ENCODE measurements at regions of chr14 and their contacts with region 1.

Region 1: GRCh38 chr14:96297000-96297399 is 41.0 kb downstream of the BDKRB1 start:
- DNase-seq: no peak
- H3K4me3 ChIP-seq: no peak overlapping the region
- H3K27ac ChIP-seq: no peak overlapping the region
- H3K27me3 ChIP-seq: no peaks in the 10 kb centered on the region
- CTCF ChIP-seq: peak; percentile 59

Region 2: GRCh38 chr14:96136352-96137005 is 160.5 kb before region 1 on chr14:
- CTCF ChIA-PET with region 1: no interaction called
- POLR2A ChIA-PET with region 1: no interaction called
- DNase-seq: no peak
- H3K4me3 ChIP-seq: no peak overlapping the region
- H3K27ac ChIP-seq: no peak overlapping the region
- H3K27me3 ChIP-seq: no peaks in the 10 kb centered on the region
- CTCF ChIP-seq: no peak

Region 3: DNA sequence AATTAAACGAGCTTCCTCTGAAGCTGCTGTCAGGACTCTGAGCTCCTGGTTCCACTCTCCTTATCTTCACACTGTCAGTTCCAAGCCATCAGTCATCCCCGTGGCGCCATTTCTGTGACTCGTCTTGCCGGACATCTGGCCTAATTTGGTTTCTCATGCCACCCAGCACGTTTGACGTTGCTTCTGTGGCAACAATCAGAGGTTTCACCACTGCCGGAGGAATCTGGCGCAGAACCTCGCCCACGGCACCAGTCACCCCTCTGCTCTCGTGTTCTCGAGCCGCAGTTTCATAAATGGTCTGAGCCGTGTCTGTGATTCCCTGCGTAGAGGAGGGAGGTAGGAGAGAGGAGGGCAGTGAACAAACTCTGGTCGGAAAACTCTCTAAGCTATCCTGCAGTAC is 11.3 kb before region 1 on chr14:
- CTCF ChIA-PET with region 1: interaction called, 30 read pairs
- POLR2A ChIA-PET with region 1: no interaction called
- DNase-seq: no peak
- H3K4me3 ChIP-seq: peak overlapping the region; percentile 5
- H3K27ac ChIP-seq: no peak overlapping the region
- H3K27me3 ChIP-seq: no peaks in the 10 kb centered on the region
- CTCF ChIP-seq: no peak

Region 4: DNA sequence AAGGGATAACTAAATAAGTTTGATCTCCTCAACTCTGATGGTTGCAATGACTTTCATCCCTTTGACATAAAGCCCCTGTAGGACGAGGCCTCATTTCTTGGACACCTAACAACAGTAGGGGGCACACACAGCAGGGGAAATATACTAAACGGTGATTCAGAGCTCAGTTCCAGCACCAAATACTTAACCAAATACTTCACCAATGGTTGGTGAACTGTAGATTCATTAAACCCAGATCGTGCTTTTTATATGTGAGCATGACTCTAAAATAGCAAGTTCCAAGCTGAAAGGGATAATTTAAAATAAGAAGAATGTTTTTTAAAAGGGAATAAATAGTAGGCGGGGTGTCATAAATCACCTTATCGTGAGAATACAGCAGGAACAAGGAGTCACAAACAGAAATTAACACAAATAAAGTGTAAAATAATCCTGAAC is 12.9 kb after region 1 on chr14:
- CTCF ChIA-PET with region 1: interaction called, 33 read pairs
- POLR2A ChIA-PET with region 1: no interaction called
- DNase-seq: no peak
- H3K4me3 ChIP-seq: no peak overlapping the region
- H3K27ac ChIP-seq: no peak overlapping the region
- H3K27me3 ChIP-seq: no peaks in the 10 kb centered on the region
- CTCF ChIP-seq: peak; percentile 29

Region 5: DNA sequence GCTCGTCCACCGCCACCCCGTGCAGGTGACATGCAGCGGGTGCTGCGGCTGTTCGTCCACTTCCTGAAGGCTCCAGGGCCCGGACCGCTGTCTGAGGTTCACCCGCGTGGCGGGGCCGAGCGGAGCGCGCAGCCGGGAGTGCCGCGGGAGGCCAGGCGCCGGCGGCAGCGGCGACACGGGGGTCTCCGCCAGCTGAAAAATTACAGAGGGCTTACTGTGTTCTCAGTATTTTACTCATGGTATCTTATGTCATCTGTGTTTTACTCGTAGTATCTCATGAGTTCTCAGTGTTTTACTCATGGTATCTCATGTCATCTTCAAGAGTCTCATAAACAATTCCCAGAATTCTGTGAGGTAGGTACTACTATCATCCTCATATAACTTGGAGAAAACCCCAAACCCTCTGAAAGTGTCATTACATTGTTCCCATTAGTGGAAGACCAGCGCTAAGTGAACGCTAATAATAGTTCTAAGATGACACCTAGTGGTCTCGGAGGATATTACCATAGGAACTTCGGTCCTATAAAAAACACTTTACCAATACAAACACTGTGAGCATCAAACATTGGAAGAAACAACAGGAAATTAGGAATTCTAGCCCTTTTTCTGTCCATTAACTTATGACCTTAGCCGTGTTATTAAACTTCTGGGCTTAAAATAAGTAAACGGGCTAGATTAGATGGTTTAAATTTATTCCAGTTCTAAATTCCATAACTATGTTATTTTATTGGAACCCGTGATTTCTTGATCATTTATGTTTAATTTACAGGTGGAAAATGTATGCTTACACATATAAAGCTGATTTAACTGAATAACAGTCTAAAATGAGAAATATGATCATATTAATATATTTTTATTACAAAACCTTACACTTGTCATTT is 127.3 kb after region 1 on chr14:
- CTCF ChIA-PET with region 1: interaction called, 25 read pairs
- POLR2A ChIA-PET with region 1: no interaction called
- DNase-seq: peak; percentile 46
- H3K4me3 ChIP-seq: peak overlapping the region; percentile 50
- H3K27ac ChIP-seq: no peak overlapping the region
- H3K27me3 ChIP-seq: peaks cover 4% of the 10 kb centered on the region
- CTCF ChIP-seq: peak; percentile 77

Region 6: DNA sequence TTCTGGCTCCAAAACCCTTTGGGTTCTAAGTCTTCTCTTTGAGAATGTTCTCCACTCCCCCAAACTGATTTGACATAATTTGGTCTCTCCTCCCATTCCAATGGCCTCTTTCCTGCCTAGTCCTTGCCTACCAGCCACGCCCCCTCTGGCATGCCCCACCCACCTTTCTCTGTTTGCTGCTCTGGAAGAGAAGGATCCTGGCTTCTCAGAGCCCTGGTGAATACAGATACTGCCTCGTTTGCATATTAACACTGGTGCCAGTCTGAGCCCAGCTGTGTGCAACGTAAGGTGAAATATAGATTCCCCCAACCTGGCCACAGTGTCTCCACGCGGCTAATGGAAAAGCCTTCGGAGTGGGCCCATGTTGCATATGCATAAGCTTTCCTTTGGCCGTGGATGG is 284.9 kb after region 1 on chr14:
- CTCF ChIA-PET with region 1: no interaction called
- POLR2A ChIA-PET with region 1: no interaction called
- DNase-seq: no peak
- H3K4me3 ChIP-seq: no peak overlapping the region
- H3K27ac ChIP-seq: no peak overlapping the region
- H3K27me3 ChIP-seq: peaks cover 38% of the 10 kb centered on the region
- CTCF ChIP-seq: no peak